ENCODE measurements at regions of chr1 and their contacts with region 1.

Region 1: DNA sequence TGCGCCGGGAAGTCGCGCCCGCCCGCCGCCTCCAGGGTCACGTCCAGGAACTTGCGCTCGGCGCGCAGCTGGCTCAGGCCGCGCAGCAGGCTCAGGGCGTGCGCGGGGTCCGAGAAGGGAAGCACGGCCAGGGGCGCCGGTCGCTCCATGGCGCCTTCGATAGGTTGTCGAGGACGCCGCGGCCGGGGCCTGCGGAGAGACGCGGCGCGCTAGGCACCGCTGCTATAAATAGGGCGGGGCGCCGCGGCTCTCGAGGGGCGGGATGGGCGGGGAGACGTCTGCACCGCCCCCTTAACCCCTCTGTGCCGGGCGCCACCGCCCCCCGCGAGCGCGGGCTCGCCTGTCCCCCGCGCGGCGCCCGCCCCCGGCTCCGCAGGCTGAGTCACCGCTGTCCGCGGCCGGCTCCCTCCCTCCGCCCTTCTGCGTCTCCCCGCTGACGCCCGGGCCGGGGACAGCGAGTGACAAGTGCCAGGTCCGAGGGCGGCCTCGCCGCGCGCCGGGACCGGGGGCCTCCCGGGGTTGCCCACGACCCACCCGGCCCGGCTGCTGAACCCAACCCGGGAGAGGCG is at the start of gene KLHL21:
- DNase-seq: peak; percentile 90
- ATAC-seq: peak; percentile 69
- H3K4me3 ChIP-seq: peak within 1 kb of the TSS; percentile 68 to 94 (median 82)
- H3K4me3 Mint-ChIP-seq: peak within 1 kb of the TSS; percentile 93
- H3K27ac ChIP-seq: peak within 1 kb of the TSS; percentile 94 to 95
- H3K27ac Mint-ChIP-seq: peak within 1 kb of the TSS; percentile 99
- H3K4me1 ChIP-seq: peaks cover 29 to 43% of the 10 kb centered on the region in 2 donors
- H3K4me1 Mint-ChIP-seq: peaks cover 38% of the 10 kb centered on the region
- H3K27me3 ChIP-seq: no peaks in the 10 kb centered on the region
- H3K27me3 Mint-ChIP-seq: no peaks in the 10 kb centered on the region
- CTCF ChIP-seq: no peak
- total RNA-seq, gene KLHL21: 29.9 and 31.0 TPM in 2 replicates

Region 2: DNA sequence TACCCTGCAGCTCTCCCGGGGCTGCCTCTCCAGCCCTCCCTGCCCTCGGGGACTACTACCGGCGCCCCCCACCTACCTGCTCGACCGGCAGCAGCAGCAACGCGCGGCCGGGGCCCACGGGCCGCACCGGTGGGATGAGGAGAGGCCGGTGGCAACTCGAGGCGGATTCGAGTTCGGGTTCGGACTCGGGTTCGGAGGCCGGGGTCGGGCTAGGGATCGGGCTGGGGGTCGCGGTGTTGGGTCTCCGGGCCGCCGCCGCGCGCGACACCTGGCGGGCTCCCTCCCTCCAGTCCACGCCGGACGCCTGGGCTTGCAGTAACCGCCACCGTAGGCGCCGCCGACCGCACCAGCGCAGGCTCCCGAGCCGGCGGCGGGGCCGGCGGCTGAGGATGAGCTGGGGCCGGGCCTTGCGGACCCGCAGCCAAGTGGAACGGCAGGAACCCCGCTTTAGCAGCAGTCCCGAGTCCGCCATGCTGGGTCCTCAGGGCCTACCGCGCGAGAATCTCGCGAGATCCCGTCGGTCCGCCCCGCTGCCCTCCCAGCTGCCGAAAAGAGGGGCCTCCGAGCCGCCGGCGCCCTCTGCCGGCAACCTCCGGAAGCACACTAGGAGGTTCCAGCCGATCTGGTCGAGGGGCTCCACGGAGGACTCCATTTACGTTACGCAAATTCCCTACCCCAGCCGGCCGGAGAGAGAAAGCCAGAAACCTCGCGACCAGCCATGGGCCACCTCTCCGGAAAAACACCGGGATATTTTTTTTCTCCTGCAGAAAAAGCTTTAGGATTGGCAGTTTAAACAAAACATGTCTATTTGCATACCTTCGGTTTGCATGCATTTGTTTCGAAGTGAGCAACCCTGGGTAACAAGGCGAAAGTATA is 48.5 kb before region 1 on chr1 and contains the start of gene NOL9:
- CTCF ChIA-PET with region 1: interaction called, 33 read pairs
- POLR2A ChIA-PET with region 1: interaction called, 14 read pairs
- intact Hi-C with region 1: loop called (anchors 1 kb)
- DNase-seq: peak; percentile 97
- ATAC-seq: peak; percentile 96
- H3K4me3 ChIP-seq: peak within 1 kb of the TSS; percentile 72 to 93 (median 84)
- H3K4me3 Mint-ChIP-seq: peak within 1 kb of the TSS; percentile 87
- H3K27ac ChIP-seq: peak within 1 kb of the TSS; percentile 14 to 86
- H3K27ac Mint-ChIP-seq: peak within 1 kb of the TSS; percentile 86
- H3K4me1 ChIP-seq: peaks cover 17 to 23% of the 10 kb centered on the region in 2 donors
- H3K4me1 Mint-ChIP-seq: peaks cover 20% of the 10 kb centered on the region
- H3K27me3 ChIP-seq: no peaks in the 10 kb centered on the region
- H3K27me3 Mint-ChIP-seq: no peaks in the 10 kb centered on the region
- CTCF ChIP-seq: peak; percentile 94
- total RNA-seq, gene NOL9: 49.5 and 56.7 TPM in 2 replicates

Region 3: GRCh38 chr1:6613361-6614018 is 10.7 kb after region 1 on chr1 and contains the start of gene PHF13:
- CTCF ChIA-PET with region 1: interaction called, 7 read pairs
- POLR2A ChIA-PET with region 1: interaction called, 19 read pairs
- intact Hi-C with region 1: loop called (anchors 1 kb)
- DNase-seq: peak; percentile 99
- ATAC-seq: peak; percentile 93
- H3K4me3 ChIP-seq: peak within 1 kb of the TSS; percentile 64 to 94 (median 77)
- H3K4me3 Mint-ChIP-seq: peak within 1 kb of the TSS; percentile 92
- H3K27ac ChIP-seq: peak within 1 kb of the TSS; percentile 7 to 77
- H3K27ac Mint-ChIP-seq: peak within 1 kb of the TSS; percentile 91
- H3K4me1 ChIP-seq: peaks cover 11 to 14% of the 10 kb centered on the region in 2 donors
- H3K4me1 Mint-ChIP-seq: peaks cover 17% of the 10 kb centered on the region
- H3K27me3 ChIP-seq: no peaks in the 10 kb centered on the region
- H3K27me3 Mint-ChIP-seq: no peaks in the 10 kb centered on the region
- CTCF ChIP-seq: no peak
- total RNA-seq, gene PHF13: 10.6 and 11.0 TPM in 2 replicates

Region 4: DNA sequence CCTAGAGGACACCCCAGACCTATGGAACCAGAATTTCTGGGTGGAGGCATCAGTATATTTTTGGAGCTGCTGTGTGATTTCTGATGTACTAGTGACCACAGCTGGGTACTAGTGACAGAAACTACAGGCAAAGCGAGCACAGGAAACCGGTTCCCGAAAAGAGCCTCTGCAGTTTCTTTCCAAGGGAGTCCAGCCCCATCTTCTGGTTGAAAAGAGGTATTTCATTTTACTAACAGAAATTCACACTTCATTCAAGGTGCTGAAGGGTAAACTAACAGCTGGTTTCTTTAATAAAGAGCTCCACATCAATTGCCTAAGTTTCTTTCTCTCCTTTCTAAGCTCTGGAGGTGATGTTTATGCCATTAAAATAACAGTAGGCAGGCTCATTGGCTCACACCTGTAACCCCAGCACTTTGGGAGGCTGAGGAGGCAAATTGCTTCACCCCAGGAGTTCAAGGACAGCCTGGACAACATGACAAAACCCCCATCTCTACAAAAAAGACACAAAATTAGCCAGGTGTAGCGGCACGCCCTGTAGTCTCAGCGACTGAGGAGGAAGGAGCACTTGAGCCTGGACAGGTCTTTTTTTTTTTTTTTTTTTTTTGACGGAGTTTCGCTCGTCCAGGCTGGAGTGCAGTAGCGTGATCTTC is 43.9 kb after region 1 on chr1:
- CTCF ChIA-PET with region 1: interaction called, 4 read pairs
- POLR2A ChIA-PET with region 1: no interaction called
- intact Hi-C with region 1: loop called (anchors 1 kb)
- DNase-seq: peak; percentile 63
- ATAC-seq: peak; percentile 57
- H3K4me3 ChIP-seq: no peak overlapping the region
- H3K4me3 Mint-ChIP-seq: no peak overlapping the region
- H3K27ac ChIP-seq: no peak overlapping the region
- H3K27ac Mint-ChIP-seq: no peak overlapping the region
- H3K4me1 ChIP-seq: no peaks in the 10 kb centered on the region
- H3K4me1 Mint-ChIP-seq: no peaks in the 10 kb centered on the region
- H3K27me3 ChIP-seq: no peaks in the 10 kb centered on the region
- H3K27me3 Mint-ChIP-seq: no peaks in the 10 kb centered on the region
- CTCF ChIP-seq: peak; percentile 76

Region 5: GRCh38 chr1:6686294-6686693 is 83.5 kb after region 1 on chr1:
- CTCF ChIA-PET with region 1: no interaction called
- POLR2A ChIA-PET with region 1: no interaction called
- intact Hi-C with region 1: no loop called
- DNase-seq: no peak
- ATAC-seq: no peak
- H3K4me3 ChIP-seq: no peak overlapping the region
- H3K4me3 Mint-ChIP-seq: no peak overlapping the region
- H3K27ac ChIP-seq: no peak overlapping the region
- H3K27ac Mint-ChIP-seq: no peak overlapping the region
- H3K4me1 ChIP-seq: no peaks in the 10 kb centered on the region
- H3K4me1 Mint-ChIP-seq: peaks cover 4% of the 10 kb centered on the region
- H3K27me3 ChIP-seq: no peaks in the 10 kb centered on the region
- H3K27me3 Mint-ChIP-seq: no peaks in the 10 kb centered on the region
- CTCF ChIP-seq: no peak

Region 6: DNA sequence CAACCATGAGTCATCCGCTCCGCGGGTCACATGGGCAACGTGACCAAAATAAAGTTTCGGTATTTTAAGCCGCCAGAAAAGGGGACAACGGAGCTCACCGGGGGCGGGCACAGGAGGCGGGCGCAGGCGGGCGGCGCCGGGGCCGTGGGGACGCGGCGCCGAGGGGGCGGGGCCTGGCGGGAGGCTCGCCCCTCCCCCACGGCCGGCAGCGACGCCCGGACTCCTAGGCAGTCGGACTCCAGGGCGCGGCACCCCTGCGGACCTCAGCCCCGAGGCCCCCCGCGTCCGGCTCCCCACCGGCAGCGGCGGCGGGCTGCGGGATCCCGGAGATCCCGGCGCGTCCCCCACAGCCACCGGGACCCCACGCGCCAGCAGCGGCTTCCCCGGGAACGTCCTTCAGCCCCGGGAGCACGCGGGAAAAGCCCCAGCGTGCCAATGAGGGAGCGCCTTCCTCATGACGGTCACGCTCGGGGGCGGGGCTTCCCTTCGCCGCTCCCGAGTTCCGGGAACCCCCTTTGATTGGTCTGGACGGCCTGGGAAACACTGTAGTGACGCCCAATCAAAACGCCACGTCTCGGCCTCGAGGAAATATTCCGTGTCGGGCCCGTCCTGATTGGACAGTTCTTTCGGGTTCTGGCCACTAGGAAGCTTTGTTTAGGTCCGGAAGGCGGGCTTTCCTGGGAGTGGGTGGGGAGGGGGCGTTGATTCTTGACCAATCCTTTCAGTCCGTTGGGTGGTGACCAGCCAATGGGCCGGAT is 182.0 kb after region 1 on chr1:
- CTCF ChIA-PET with region 1: no interaction called
- POLR2A ChIA-PET with region 1: no interaction called
- intact Hi-C with region 1: loop called (anchors 2 kb)
- DNase-seq: peak; percentile 100
- ATAC-seq: peak; percentile 78
- H3K4me3 ChIP-seq: peak overlapping the region; percentile 66 to 84 (median 77)
- H3K4me3 Mint-ChIP-seq: peak overlapping the region; percentile 95
- H3K27ac ChIP-seq: peak overlapping the region; percentile 87 to 99
- H3K27ac Mint-ChIP-seq: peak overlapping the region; percentile 97
- H3K4me1 ChIP-seq: peaks cover 15 to 18% of the 10 kb centered on the region in 2 donors
- H3K4me1 Mint-ChIP-seq: peaks cover 51% of the 10 kb centered on the region
- H3K27me3 ChIP-seq: no peaks in the 10 kb centered on the region
- H3K27me3 Mint-ChIP-seq: no peaks in the 10 kb centered on the region
- CTCF ChIP-seq: no peak

Measured in B cell (primary cell).